ENCODE measurements at regions of chr1 and their contacts with region 1.

Region 1: GRCh38 chr1:181105134-181106021 is 16.9 kb downstream of the IER5 start:
- DNase-seq: no peak
- H3K4me3 ChIP-seq: peak overlapping the region; percentile 76
- CTCF ChIP-seq: no peak

Region 2: DNA sequence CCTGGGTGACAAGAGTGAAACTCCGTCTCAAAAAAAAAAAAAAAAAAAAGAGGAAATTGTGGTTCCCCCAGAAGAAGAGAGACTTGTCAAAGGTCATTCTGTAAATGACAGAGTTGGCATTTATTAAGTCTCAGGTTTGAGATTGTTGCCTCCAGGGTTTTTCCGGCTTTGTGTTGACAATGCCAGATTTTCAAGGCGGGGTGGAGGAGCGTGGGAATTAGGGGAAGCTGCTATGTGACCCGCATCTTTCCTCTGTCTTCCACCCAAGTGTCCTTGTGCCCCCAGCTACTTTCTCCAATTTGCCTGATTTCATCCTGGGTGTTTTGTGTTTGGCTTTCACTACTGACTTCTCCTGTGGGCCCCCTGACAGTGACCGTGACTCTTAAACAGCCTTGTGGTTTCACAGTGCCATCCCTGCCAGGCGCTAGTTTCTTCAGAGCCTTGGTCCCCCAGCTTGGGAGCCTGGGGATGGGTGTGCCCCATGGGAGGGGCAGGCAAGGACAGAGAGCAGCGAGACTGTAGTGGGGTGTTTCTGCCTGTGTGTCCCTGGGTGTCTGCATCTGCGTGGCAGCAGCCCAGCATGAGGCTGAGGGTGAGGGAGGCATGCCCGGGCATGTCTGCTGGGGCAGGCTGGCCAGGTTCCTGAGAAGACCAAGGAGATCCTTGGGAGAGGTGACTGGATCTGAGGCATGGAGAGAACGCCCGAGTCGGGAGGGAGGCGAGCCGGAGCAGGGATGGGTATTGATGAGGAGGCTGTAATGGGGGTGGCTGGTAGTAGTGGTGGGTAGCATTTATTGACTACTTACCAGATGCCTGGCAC is 29.4 kb after region 1 on chr1:
- CTCF ChIA-PET with region 1: interaction called, 15 read pairs
- POLR2A ChIA-PET with region 1: interaction called, 11 read pairs
- DNase-seq: peak; percentile 68
- H3K4me3 ChIP-seq: no peak overlapping the region
- CTCF ChIP-seq: no peak

Measured in AG04449 (cell line).